Activated CD4-positive, alpha-beta memory T cell treated with anti-CD3 and anti-CD28 coated beads for 36 hours (primary cell): ENCODE measurements at regions of chr6 and their contacts with region 1.

Region 1: DNA sequence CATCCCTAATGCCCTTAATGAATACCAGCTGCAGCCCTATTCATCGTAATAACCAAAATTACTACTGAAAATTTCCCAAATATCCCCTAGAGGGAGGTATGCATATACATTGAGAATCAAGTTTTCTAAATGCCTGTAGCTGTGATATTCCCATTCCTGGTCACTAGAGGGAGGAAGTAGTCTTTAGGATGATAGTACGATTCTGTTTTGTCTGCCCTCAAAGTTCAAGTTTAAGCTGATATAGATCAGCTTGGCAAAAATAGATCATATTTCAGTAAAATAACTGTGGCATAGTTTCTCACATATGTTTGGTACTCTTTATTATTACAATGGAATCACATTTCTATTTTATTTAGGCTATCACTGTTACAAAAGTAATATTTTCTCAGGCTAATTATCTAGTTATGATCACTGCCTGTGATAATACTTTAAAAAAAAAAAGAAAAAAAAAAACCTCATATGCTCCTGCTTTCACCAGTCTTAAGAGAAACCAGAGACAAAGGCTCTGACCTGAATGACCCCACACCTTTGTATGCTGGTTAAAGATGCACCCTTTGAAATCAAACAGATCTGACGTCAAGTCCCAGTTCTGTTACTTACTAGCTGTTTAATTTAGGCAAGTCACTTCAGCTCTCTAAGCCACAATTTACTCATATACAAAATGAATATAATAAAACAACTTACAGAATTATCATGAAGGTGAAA is 11.0 kb downstream of the TSPYL1 start:
- DNase-seq: no peak
- H3K4me3 Mint-ChIP-seq: no peak overlapping the region
- H3K27ac Mint-ChIP-seq: peak overlapping the region; percentile 4
- H3K4me1 Mint-ChIP-seq: peaks cover 23% of the 10 kb centered on the region
- H3K27me3 Mint-ChIP-seq: no peaks in the 10 kb centered on the region

Region 2: DNA sequence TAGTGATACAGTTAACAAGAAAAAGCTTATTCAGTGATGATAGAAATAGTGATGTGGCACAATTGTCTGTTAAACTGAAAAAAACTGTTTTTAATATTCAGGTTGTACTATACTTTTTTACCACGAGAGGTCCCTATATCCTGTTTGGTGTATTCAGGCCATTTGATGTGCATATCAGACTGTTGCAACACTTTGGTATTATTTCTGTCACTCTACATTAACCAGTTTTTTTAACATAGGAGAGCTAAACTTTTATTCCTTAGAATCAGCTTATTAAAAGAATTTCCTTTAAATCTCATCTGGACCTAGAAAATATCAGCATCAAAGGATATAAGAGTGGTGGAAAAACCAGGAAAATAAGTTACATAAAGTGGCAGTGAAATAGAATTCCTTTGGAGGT is 51.7 kb before region 1 on chr6:
- CTCF ChIA-PET with region 1: interaction called, 13 read pairs
- POLR2A ChIA-PET with region 1: no interaction called
- intact Hi-C with region 1: no loop called
- DNase-seq: no peak
- H3K4me3 Mint-ChIP-seq: no peak overlapping the region
- H3K27ac Mint-ChIP-seq: no peak overlapping the region
- H3K4me1 Mint-ChIP-seq: no peaks in the 10 kb centered on the region
- H3K27me3 Mint-ChIP-seq: no peaks in the 10 kb centered on the region

Region 3: DNA sequence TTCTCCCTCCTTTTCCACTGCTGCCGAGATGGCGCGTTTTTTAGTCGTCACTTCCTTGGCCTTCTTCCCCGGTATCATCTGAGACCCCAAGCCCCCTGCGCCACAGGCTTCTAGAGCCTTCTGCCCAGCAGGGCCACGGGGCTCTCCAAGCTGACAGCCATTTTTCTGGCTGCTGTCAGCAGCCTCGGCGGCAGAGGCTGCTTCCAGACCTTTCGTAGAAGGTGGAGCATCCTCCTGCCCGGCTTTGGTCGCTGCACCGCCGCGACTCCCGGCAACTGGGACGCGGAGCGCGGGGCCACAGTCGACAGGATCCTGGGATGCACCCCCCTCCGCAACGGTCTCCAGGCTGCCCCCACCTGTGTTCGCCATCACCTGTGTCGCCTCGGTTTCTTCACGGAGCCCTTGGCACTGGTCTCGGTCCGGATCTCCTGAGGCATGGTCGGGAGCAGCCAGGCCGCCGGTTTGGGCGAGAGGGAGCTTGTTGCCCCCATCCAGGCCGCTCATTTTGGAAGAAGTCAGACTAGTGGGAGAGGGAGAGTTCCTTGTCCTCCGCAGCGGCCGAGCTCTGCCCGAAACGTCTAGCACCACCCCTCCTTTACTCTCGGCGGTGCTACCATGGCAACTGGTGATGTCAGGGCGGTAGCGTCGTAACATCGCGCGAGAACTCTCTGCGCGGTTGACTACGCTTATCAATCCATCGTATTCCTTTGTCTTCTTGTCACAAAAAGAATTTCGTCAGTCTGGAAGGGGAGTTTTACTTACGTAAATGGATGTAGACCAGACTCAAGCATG is 15.0 kb before region 1 on chr6 and contains the start of gene TSPYL4:
- CTCF ChIA-PET with region 1: interaction called, 20 read pairs
- POLR2A ChIA-PET with region 1: interaction called, 3 read pairs
- intact Hi-C with region 1: loop called (anchors 1 kb)
- DNase-seq: peak; percentile 95
- H3K4me3 Mint-ChIP-seq: no peak within 1 kb of the TSS
- H3K27ac Mint-ChIP-seq: no peak within 1 kb of the TSS
- H3K4me1 Mint-ChIP-seq: peaks cover 8% of the 10 kb centered on the region
- H3K27me3 Mint-ChIP-seq: no peaks in the 10 kb centered on the region
- total RNA-seq, gene TSPYL4: 10.5 to 11.1 TPM

Region 4: GRCh38 chr6:116287689-116288282 is 19.0 kb after region 1 on chr6:
- CTCF ChIA-PET with region 1: interaction called, 11 read pairs
- POLR2A ChIA-PET with region 1: no interaction called
- intact Hi-C with region 1: no loop called
- DNase-seq: no peak
- H3K4me3 Mint-ChIP-seq: no peak overlapping the region
- H3K27ac Mint-ChIP-seq: no peak overlapping the region
- H3K4me1 Mint-ChIP-seq: no peaks in the 10 kb centered on the region
- H3K27me3 Mint-ChIP-seq: no peaks in the 10 kb centered on the region

Region 5: GRCh38 chr6:116444092-116444491 is 175.4 kb after region 1 on chr6:
- CTCF ChIA-PET with region 1: no interaction called
- POLR2A ChIA-PET with region 1: no interaction called
- intact Hi-C with region 1: loop called (anchors 2 kb)
- DNase-seq: no peak
- H3K4me3 Mint-ChIP-seq: no peak overlapping the region
- H3K27ac Mint-ChIP-seq: no peak overlapping the region
- H3K4me1 Mint-ChIP-seq: peaks cover 7% of the 10 kb centered on the region
- H3K27me3 Mint-ChIP-seq: peaks cover 9% of the 10 kb centered on the region